Activated CD4-positive, alpha-beta T cell treated with anti-CD3 and anti-CD28 coated beads for 36 hours (primary cell): ENCODE measurements at regions of chr5 and their contacts with region 1.

Region 1: GRCh38 chr5:176481711-176482110 is 33.5 kb downstream of the FAF2 start:
- DNase-seq: peak; percentile 10
- ATAC-seq: peak; percentile 76
- H3K4me3 Mint-ChIP-seq: no peak overlapping the region
- H3K27ac Mint-ChIP-seq: peak overlapping the region; percentile 13
- H3K4me1 Mint-ChIP-seq: peaks cover 23% of the 10 kb centered on the region
- H3K27me3 Mint-ChIP-seq: no peaks in the 10 kb centered on the region

Region 2: DNA sequence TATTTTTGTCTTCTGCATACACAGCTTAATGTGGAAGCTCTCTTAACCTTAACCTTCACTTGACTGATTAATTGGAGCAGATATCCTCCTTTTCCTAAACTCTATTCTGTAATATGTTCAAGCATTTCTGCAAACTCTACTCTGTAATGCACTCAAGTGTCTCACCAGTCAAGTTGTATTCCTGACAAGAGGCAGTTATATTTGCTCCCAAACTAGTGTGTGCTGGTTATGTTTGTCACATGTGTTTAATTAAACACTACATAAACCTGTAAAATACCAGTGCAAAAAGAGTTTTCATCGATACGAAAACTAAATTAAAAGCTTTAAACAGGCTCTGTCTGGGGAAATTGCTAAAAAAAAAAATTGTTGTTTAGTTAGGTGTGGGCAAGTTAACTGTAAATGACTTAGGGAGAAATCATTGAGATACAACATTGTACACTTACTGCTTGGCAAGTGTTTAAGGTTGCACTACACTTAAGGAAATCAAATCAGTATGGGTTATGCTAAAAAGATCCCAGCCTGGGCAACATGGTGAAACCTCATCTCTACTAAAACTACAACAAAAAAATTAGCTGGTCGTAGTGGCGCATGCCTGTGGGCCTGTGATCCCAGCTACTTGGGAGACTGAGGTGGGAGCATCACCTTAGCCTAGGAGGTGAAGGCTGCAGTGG is 26.9 kb before region 1 on chr5:
- CTCF ChIA-PET with region 1: no interaction called
- POLR2A ChIA-PET with region 1: no interaction called
- intact Hi-C with region 1: no loop called
- DNase-seq: no peak
- ATAC-seq: no peak
- H3K4me3 Mint-ChIP-seq: no peak overlapping the region
- H3K27ac Mint-ChIP-seq: no peak overlapping the region
- H3K4me1 Mint-ChIP-seq: peaks cover 39% of the 10 kb centered on the region
- H3K27me3 Mint-ChIP-seq: no peaks in the 10 kb centered on the region

Region 3: DNA sequence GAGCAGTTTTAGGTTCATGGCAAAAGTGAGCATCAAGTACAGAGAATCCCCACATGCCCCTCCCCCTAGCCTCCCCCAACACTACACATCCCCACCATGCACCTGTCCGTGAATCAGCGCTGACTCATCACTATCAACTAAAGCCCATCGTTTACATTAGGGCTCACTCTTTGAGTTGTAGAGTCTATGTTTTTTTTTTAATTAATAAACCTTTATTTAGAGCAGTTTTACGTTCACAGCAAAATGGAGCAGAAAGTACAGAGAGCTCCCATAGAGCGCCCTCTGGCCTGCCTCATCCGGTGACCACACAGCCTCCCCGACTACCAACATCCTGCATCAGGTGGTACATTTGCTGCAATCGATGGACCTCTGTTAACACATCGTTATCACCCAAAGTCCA is 280.8 kb after region 1 on chr5:
- CTCF ChIA-PET with region 1: no interaction called
- POLR2A ChIA-PET with region 1: no interaction called
- intact Hi-C with region 1: no loop called
- DNase-seq: no peak
- ATAC-seq: no peak
- H3K4me3 Mint-ChIP-seq: no peak overlapping the region
- H3K27ac Mint-ChIP-seq: no peak overlapping the region
- H3K4me1 Mint-ChIP-seq: peaks cover 3% of the 10 kb centered on the region
- H3K27me3 Mint-ChIP-seq: peaks cover 42% of the 10 kb centered on the region

Region 4: DNA sequence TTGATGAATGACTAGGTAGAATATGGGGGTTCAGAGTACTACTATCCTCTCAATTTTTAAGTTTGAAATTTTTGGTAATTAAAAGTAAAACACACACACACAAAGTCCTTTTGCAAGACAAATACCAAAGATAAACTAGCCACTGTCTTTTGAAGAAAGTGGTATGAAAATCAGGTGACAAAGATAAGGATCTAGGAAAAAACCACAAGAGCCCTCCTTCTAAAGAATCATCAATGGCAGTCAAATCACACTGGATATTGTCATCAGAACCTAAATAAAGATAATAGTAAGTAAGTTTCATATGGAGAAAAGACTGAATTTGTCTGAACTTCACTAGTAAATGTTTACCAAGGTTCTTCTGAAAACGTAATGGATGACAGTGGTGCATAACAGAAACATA is 447.9 kb after region 1 on chr5:
- CTCF ChIA-PET with region 1: no interaction called
- POLR2A ChIA-PET with region 1: no interaction called
- intact Hi-C with region 1: loop called in 1 of 2 experiments (anchors 10 kb)
- DNase-seq: no peak
- ATAC-seq: no peak
- H3K4me3 Mint-ChIP-seq: no peak overlapping the region
- H3K27ac Mint-ChIP-seq: no peak overlapping the region
- H3K4me1 Mint-ChIP-seq: peaks cover 6% of the 10 kb centered on the region
- H3K27me3 Mint-ChIP-seq: no peaks in the 10 kb centered on the region